ENCODE measurements at regions of chr7 and their contacts with region 1.

Region 1: GRCh38 chr7:87506246-87507180 is 31.0 kb upstream of the ABCB4 start:
- DNase-seq: no peak
- H3K4me3 Mint-ChIP-seq: no peak overlapping the region
- H3K27ac Mint-ChIP-seq: no peak overlapping the region
- H3K4me1 Mint-ChIP-seq: no peaks in the 10 kb centered on the region
- H3K27me3 Mint-ChIP-seq: no peaks in the 10 kb centered on the region

Region 2: DNA sequence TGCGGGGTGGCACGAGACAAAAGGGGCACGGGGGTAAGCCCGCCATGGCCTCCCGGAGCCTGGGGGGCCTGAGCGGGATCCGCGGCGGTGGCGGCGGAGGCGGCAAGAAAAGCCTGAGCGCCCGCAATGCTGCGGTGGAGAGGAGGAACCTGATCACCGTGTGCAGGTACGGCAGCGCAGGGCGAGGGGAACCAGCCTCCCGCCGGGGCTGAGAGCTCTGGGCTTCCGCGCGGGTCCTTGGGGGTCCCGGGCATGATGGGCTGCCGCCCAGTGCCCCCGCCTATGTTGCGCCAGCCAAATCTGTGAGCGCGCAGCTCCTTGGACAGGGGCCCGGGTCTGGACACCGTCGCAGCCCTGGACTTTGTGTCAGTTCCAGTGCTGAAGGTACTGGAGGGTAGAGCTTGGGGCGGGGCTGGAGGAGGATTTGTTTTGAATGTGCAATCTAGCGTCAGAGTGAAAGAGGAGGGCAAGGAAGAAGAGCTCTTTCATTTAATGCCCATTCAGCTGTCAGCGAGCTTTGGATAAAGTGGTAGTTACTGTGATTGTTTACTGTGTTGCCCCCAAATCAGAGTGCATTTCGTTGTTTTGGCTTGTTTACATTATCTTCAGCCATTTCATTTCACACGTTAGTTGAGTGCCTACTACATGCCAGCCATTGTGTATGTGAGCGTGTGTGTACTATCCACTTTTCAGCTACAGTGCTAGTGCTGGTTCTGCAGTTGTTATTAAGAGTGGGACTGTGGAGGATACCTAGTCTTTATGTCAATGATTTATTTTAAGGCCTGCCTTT is 122.5 kb after region 1 on chr7:
- CTCF ChIA-PET with region 1: no interaction called
- intact Hi-C with region 1: loop called (anchors 1 kb)
- DNase-seq: peak; percentile 33
- H3K4me3 Mint-ChIP-seq: peak overlapping the region; percentile 75
- H3K27ac Mint-ChIP-seq: no peak overlapping the region
- H3K4me1 Mint-ChIP-seq: peaks cover 7% of the 10 kb centered on the region
- H3K27me3 Mint-ChIP-seq: peaks cover 6% of the 10 kb centered on the region

Region 3: GRCh38 chr7:87886875-87887274 is 380.4 kb after region 1 on chr7:
- CTCF ChIA-PET with region 1: interaction called, 4 read pairs
- intact Hi-C with region 1: loop called (anchors 1 kb)
- DNase-seq: no peak
- H3K4me3 Mint-ChIP-seq: no peak overlapping the region
- H3K27ac Mint-ChIP-seq: no peak overlapping the region
- H3K4me1 Mint-ChIP-seq: peaks cover 6% of the 10 kb centered on the region
- H3K27me3 Mint-ChIP-seq: no peaks in the 10 kb centered on the region

Region 4: DNA sequence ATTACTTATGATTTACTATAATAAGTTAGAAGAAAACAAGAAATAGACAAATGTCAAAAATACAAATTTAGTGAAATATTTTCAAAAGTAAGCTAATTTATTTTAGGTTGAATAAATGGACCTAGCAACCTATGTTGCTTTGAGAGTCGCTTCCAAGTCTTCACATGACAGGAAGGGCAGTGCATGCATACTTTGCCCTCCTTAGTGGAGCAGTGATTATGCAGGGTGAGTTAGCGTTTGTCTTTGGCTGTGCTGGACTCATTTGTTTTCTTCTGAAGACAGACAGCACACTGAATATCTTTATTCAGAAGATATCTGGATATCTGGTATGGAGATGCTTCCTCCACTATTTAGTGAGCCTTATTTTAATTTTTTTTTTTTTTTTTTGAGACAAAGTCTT is 610.8 kb after region 1 on chr7:
- CTCF ChIA-PET with region 1: no interaction called
- intact Hi-C with region 1: no loop called
- DNase-seq: no peak
- H3K4me3 Mint-ChIP-seq: no peak overlapping the region
- H3K27ac Mint-ChIP-seq: no peak overlapping the region
- H3K4me1 Mint-ChIP-seq: no peaks in the 10 kb centered on the region
- H3K27me3 Mint-ChIP-seq: no peaks in the 10 kb centered on the region

Region 5: GRCh38 chr7:88169717-88170320 is 663.3 kb after region 1 on chr7:
- CTCF ChIA-PET with region 1: interaction called, 4 read pairs
- intact Hi-C with region 1: loop called (anchors 5 kb)
- DNase-seq: no peak
- H3K4me3 Mint-ChIP-seq: no peak overlapping the region
- H3K27ac Mint-ChIP-seq: no peak overlapping the region
- H3K4me1 Mint-ChIP-seq: no peaks in the 10 kb centered on the region
- H3K27me3 Mint-ChIP-seq: no peaks in the 10 kb centered on the region

Measured in activated naive CD4-positive, alpha-beta T cell treated with anti-CD3 and anti-CD28 coated beads for 36 hours (primary cell).